Gastrocnemius medialis (tissue), 4 donors: ENCODE measurements at regions of chr2 and their contacts with region 1.

Region 1: DNA sequence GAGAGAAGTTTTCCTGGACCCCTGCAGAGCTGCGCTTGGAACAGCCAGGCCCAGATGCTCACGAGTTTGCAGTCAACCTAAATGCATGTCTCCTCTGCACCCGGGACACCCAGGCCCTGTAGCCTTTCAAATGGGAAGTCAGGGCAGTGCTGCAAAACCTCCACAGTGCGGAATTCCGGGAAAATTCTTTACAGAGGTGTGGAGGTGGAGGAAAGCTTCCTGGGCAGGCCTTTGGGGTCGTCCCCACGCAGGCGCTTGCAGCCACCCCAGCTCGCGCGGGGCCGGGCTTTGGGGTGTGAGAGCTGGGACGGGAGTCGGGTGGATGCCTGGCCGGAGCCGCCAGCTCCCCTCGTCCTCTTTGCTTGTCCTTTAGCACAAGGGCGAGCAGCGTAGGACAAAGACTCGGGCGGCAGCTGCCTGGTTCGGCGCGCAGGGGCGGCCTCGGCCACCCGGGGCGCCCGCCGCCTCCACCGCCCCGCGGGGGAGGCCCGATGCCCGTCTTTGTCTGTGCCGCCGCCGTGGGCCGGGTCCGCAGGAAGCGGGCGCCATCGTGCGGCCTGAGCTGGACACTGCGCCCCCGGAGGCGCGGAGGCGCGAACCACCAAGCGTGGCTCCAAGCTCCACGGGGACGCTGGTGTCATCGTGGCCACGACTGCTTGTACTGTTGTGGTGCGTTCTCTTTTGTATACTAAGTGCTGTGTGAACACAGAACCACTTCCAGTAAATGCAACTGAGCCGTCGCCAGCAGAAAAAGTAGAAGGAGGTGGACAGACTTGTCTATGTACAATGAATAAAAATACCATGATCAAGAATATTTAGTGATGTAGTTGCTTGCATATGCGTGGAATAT is 28.2 kb upstream of the BCL11A start:
- DNase-seq: peak; percentile 10 to 17
- ATAC-seq: peak; percentile 58 to 86
- H3K4me3 ChIP-seq: peak overlapping the region in 3 of 4 donors; percentile 29 to 44 (median 41)
- H3K27ac ChIP-seq: no peak overlapping the region
- H3K4me1 ChIP-seq: peaks cover 0 to 3% of the 10 kb centered on the region in 2 donors
- H3K27me3 ChIP-seq: peaks cover 6 to 11% (median 7%) of the 10 kb centered on the region in 3 donors
- CTCF ChIP-seq: peak; percentile 69 to 91 (median 79)
- POLR2A ChIP-seq: no peak

Region 2: DNA sequence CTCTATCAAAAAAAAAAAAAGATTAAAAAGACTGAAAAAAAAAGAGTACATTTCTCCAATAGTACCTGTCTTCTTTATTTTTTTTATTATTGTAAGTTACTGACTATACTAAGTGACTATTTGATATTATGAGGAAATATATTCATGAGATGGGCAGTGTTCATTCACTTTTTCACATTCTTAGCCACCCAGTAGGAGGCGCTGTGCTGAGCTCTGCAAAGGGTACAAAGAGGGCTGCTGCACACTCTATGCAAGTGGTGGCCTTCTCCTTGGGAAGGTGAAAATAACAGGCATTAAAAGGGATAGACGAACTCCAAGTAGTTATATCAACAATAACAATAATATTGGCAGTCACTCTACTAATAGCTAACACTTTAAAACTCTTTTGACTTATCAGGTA is 1305.6 kb before region 1 on chr2:
- in situ Hi-C with region 1: loop called in 1 of 4 experiments (anchors 25 kb)
- intact Hi-C with region 1: no loop called
- DNase-seq: no peak
- ATAC-seq: no peak
- H3K4me3 ChIP-seq: no peak overlapping the region
- H3K27ac ChIP-seq: no peak overlapping the region
- H3K4me1 ChIP-seq: no peaks in the 10 kb centered on the region
- H3K27me3 ChIP-seq: no peaks in the 10 kb centered on the region
- CTCF ChIP-seq: no peak
- POLR2A ChIP-seq: no peak

Region 3: DNA sequence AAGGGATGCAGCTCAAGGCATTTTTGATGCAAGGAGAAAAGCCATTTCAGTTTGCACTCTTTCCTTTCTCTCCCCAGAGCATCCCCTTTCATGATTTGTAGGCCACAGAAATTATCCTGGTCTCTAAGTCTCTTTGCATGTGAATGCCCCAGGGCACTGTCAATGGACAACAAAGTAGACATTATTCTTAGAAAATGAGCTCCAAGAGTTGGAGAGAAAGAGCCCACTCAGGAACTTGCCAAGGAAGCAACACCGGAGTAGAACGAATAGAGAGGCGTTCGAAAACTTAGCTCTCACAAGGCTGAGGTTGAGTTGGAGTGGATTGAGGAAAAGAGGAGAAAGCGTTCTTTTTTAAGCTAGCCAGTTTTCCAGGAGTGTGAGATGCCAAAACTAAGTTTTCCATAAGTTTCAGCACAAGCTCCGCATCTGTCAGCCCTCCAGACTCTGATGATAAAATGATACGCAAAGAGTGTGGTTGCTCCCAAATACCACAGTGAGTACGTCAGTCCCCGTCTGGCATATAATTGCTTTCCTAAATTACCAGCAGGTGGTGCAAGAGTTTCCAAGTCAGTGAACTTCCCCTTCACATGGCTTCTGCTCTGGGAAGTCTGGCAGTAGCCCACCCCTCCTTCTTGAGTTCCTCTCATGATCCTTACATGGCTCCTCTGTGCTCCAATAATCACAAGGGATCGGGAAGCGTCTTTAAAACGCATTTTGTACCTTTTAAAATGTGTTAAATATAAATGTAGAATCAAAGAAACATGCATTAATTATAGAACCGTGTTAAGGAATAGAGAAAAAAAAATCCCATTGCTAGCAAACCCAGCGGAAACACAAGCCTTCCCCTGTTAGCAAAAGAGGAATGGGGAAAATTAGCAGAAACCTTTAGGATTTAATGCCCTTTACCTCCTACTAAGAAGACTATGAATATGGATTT is 1279.9 kb before region 1 on chr2:
- in situ Hi-C with region 1: loop called in 2 of 4 experiments (anchors 10 to 25 kb)
- intact Hi-C with region 1: no loop called
- DNase-seq: peak in 1 of 2 donors; percentile 12
- ATAC-seq: peak; percentile 69 to 80
- H3K4me3 ChIP-seq: no peak overlapping the region
- H3K27ac ChIP-seq: no peak overlapping the region
- H3K4me1 ChIP-seq: no peaks in the 10 kb centered on the region
- H3K27me3 ChIP-seq: no peaks in the 10 kb centered on the region
- CTCF ChIP-seq: peak in 2 of 5 experiments; percentile 48 to 61
- POLR2A ChIP-seq: no peak